Lower lobe of right lung (tissue), 2 donors: ENCODE measurements at regions of chr9 and their contacts with region 1.

Region 1: DNA sequence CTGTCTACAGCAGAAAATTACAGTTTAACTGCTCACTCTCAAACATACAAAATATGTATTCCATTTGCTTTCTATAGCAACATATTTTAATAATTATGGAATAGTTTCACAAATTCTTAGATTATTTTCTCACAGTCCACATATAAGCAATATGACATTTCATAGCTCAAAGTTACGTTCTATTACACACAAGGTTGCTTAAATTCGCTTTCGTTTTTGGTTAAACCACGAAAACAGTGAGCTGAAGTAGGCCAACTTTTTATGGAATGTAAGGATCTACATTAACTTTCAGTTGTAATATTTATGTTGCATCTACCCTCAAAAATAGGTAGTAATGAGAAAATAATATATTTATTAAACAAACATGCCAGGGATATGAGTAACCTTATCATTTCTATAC is 966.0 kb upstream of the ACO1 start:
- DNase-seq: no peak
- ATAC-seq: no peak
- H3K4me3 ChIP-seq: no peak overlapping the region
- H3K27ac ChIP-seq: no peak overlapping the region
- H3K4me1 ChIP-seq: no peaks in the 10 kb centered on the region
- H3K27me3 ChIP-seq: no peaks in the 10 kb centered on the region
- CTCF ChIP-seq: no peak

Region 2: DNA sequence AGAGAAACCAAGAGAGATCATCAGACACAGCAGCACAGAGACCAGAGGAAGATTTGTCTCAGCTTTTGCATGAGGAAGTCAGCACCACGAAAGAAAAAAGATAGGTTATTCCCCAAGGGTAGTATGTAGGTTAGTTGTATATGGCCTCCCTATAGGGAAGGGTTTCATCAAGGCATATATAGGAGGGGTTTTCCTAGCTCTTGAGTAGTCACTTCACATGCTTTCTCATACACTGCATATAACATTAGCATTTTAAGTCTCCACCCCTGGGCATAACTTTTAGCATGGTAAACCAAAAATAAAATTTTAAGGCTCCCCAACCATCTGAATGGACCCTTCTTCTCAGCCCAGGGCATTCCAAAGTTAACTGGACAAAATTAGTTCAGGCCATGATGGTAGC is 605.6 kb before region 1 on chr9:
- intact Hi-C with region 1: no loop called
- DNase-seq: no peak
- ATAC-seq: no peak
- H3K4me3 ChIP-seq: no peak overlapping the region
- H3K27ac ChIP-seq: no peak overlapping the region
- H3K4me1 ChIP-seq: no peaks in the 10 kb centered on the region
- H3K27me3 ChIP-seq: no peaks in the 10 kb centered on the region
- CTCF ChIP-seq: no peak

Region 3: DNA sequence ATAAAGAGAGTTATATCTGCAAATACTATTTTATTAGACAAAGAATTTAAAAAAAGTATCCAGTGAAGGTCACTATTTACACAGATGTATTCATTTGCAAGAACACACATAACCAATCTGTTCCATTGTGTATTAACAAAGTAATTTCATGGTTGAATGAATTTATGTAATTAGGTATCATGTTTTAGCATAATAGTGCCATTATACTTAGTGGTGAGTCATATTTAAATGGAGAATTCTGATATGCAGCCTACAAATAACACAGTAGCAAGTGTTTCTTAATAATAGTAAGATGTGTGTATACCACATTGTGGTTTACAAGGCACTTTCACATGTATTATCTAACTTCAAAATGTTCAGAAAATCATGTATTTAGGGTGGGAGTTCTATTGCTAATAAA is 62.5 kb before region 1 on chr9:
- intact Hi-C with region 1: loop called (anchors 10 kb)
- DNase-seq: no peak
- ATAC-seq: no peak
- H3K4me3 ChIP-seq: no peak overlapping the region
- H3K27ac ChIP-seq: no peak overlapping the region
- H3K4me1 ChIP-seq: no peaks in the 10 kb centered on the region
- H3K27me3 ChIP-seq: no peaks in the 10 kb centered on the region
- CTCF ChIP-seq: no peak

Region 4: GRCh38 chr9:31372799-31373587 is 45.4 kb before region 1 on chr9:
- intact Hi-C with region 1: no loop called
- DNase-seq: no peak
- ATAC-seq: no peak
- H3K4me3 ChIP-seq: no peak overlapping the region
- H3K27ac ChIP-seq: no peak overlapping the region
- H3K4me1 ChIP-seq: no peaks in the 10 kb centered on the region
- H3K27me3 ChIP-seq: no peaks in the 10 kb centered on the region
- CTCF ChIP-seq: no peak